ENCODE measurements at regions of chr2 and their contacts with region 1.

Region 1: DNA sequence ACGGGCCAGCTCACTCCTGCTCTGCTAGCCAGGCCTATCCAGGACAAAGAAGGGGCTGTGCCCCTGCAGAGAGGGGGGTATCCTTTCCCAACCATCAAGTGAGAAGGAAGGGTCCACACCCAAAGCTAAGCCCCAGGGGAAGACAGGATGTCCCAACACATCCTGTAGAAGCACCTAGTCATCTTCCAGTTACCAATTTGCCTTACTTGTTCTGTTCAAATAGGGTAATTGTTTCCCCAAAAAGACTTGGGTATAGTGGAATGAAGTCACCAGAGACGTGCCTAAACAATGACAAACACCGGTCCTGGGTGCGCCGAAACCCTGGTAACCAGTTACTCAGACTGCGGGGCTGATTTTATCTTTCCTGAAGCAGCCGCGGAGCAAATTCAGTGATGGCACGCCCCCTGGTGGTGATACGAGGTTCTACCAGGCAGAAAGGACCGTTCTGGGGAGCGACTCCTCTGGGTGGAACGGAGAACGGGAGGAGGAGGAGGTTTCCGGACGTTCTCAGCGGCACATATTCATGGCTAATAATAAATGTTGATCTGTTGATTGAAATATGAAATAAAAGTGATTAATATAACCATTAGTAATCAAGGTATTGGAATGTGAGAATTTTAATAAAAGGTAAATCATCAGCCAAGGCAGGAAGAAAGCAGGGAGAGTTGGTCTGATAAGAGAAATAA is 109.3 kb upstream of the STON1 start:
- DNase-seq: peak; percentile 79 to 92 (median 88)
- ATAC-seq: peak; percentile 97
- H3K4me3 ChIP-seq: peak overlapping the region; percentile 33
- H3K4me3 Mint-ChIP-seq: peak overlapping the region in 9 of 10 donors; percentile 16 to 68 (median 49)
- H3K27ac ChIP-seq: peak overlapping the region; percentile 25
- H3K27ac Mint-ChIP-seq: peak overlapping the region in 8 of 9 donors; percentile 52 to 82 (median 72)
- H3K4me1 ChIP-seq: peaks cover 4 to 14% of the 10 kb centered on the region in 2 donors
- H3K4me1 Mint-ChIP-seq: peaks cover 14 to 39% (median 32%) of the 10 kb centered on the region in 7 donors
- H3K27me3 ChIP-seq: no peaks in the 10 kb centered on the region
- H3K27me3 Mint-ChIP-seq: peaks cover 0 to 4% (median 0%) of the 10 kb centered on the region in 5 donors

Region 2: GRCh38 chr2:48107326-48107925 is 313.2 kb before region 1 on chr2:
- CTCF ChIA-PET with region 1: interaction called, 11 read pairs
- POLR2A ChIA-PET with region 1: no interaction called
- intact Hi-C with region 1: loop called (anchors 1 kb)
- DNase-seq: no peak
- ATAC-seq: no peak
- H3K4me3 ChIP-seq: no peak overlapping the region
- H3K4me3 Mint-ChIP-seq: no peak overlapping the region
- H3K27ac ChIP-seq: no peak overlapping the region
- H3K27ac Mint-ChIP-seq: no peak overlapping the region
- H3K4me1 ChIP-seq: peaks cover 0 to 3% of the 10 kb centered on the region in 2 donors
- H3K4me1 Mint-ChIP-seq: peaks cover 4 to 26% (median 17%) of the 10 kb centered on the region in 7 donors
- H3K27me3 ChIP-seq: no peaks in the 10 kb centered on the region
- H3K27me3 Mint-ChIP-seq: peaks cover 0 to 9% (median 0%) of the 10 kb centered on the region in 5 donors

Region 3: DNA sequence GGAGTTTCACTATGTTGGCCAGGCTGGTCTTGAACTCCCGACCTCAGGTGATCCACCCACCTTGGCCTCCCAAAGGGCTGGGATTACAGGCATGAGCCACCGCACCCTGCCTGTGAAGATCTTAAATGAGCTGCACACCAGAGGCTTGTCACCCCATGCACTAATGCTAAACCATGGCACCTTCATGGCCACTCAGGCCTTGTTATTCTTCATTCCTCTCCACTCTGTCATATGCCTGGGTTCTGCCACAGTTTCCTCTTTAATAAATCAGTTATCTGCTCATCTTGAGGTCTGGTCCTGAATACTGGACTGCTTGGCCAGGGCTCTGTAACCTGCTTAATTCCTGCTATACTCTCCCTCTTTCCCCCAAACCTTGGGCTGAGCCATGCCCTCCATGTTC is 210.5 kb before region 1 on chr2:
- CTCF ChIA-PET with region 1: interaction called, 3 read pairs
- POLR2A ChIA-PET with region 1: no interaction called
- intact Hi-C with region 1: loop called in 1 of 2 experiments (anchors 5 kb)
- DNase-seq: no peak
- ATAC-seq: no peak
- H3K4me3 ChIP-seq: no peak overlapping the region
- H3K4me3 Mint-ChIP-seq: no peak overlapping the region
- H3K27ac ChIP-seq: no peak overlapping the region
- H3K27ac Mint-ChIP-seq: peak overlapping the region in 1 of 9 donors; percentile 3
- H3K4me1 ChIP-seq: no peaks in the 10 kb centered on the region
- H3K4me1 Mint-ChIP-seq: peaks cover 0 to 9% (median 0%) of the 10 kb centered on the region in 7 donors
- H3K27me3 ChIP-seq: no peaks in the 10 kb centered on the region
- H3K27me3 Mint-ChIP-seq: no peaks in the 10 kb centered on the region

Region 4: GRCh38 chr2:48343571-48344440 is 76.8 kb before region 1 on chr2:
- CTCF ChIA-PET with region 1: no interaction called
- POLR2A ChIA-PET with region 1: no interaction called
- intact Hi-C with region 1: loop called in 1 of 2 experiments (anchors 1 kb)
- DNase-seq: peak in 7 of 9 donors; percentile 36 to 74 (median 64)
- ATAC-seq: peak; percentile 86
- H3K4me3 ChIP-seq: peak overlapping the region; percentile 47
- H3K4me3 Mint-ChIP-seq: peak overlapping the region; percentile 31 to 85 (median 69)
- H3K27ac ChIP-seq: peak overlapping the region; percentile 36
- H3K27ac Mint-ChIP-seq: peak overlapping the region; percentile 57 to 89 (median 79)
- H3K4me1 ChIP-seq: peaks cover 13 to 23% of the 10 kb centered on the region in 2 donors
- H3K4me1 Mint-ChIP-seq: peaks cover 20 to 80% (median 57%) of the 10 kb centered on the region in 7 donors
- H3K27me3 ChIP-seq: no peaks in the 10 kb centered on the region
- H3K27me3 Mint-ChIP-seq: no peaks in the 10 kb centered on the region

Measured in naive thymus-derived CD4-positive, alpha-beta T cell (primary cell).